ENCODE measurements at regions of chr13 and their contacts with region 1.

Region 1: DNA sequence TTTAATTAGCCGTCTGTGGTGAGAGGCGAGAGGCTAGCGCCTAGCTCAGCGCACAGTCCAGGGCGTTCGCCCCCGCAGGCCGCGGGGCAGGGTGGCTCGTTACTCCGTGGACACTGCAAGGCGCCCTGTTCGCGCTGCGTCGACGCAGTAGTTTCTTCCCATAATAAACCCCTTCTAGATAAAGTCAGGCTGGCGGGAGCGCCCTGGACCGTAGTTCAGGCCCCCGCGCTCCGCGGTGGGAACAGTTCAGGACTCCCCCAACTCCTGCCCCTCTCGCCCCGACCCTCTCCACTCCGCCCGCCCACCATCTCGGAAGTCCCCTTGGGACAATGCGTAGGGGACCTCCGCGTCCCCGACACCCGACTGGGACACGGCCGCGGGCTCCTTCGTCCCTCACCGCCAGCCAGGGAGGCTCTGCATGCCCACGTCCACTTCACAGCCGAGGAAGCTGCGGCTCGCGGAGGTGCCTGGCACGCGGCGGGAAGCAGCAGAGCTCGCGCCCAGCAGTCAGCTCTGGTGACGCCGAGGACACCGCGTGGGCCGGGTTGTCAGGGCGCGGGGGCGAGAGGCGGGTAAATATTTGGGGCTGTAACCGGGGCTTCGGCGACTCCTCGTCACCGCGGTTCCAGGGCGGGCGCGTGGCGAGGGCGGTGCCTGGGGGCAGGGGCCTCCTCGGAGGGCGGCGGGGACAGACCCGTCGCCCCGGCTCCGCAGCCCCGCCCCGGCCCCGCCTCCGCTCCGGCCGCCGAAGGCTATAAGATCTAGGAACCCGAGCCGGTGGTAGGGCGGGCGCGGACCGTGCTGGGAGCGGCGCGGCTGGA is at the start of gene RGCC:
- DNase-seq: peak; percentile 97
- H3K4me3 Mint-ChIP-seq: peak within 1 kb of the TSS; percentile 93
- H3K27ac Mint-ChIP-seq: peak within 1 kb of the TSS; percentile 97
- H3K4me1 Mint-ChIP-seq: peaks cover 41% of the 10 kb centered on the region
- H3K27me3 Mint-ChIP-seq: peaks cover 26% of the 10 kb centered on the region
- total RNA-seq, gene RGCC: 113 and 117 TPM in 2 replicates

Region 2: GRCh38 chr13:41310963-41311606 is 145.9 kb before region 1 on chr13 and contains the start of gene NAA16:
- intact Hi-C with region 1: loop called (anchors 2 kb)
- DNase-seq: peak; percentile 98
- H3K4me3 Mint-ChIP-seq: peak within 1 kb of the TSS; percentile 94
- H3K27ac Mint-ChIP-seq: peak within 1 kb of the TSS; percentile 93
- H3K4me1 Mint-ChIP-seq: peaks cover 37% of the 10 kb centered on the region
- H3K27me3 Mint-ChIP-seq: no peaks in the 10 kb centered on the region
- total RNA-seq, gene NAA16: 30.3 and 31.2 TPM in 2 replicates

Region 3: GRCh38 chr13:41345914-41346589 is 110.9 kb before region 1 on chr13:
- intact Hi-C with region 1: no loop called
- DNase-seq: peak; percentile 45
- H3K4me3 Mint-ChIP-seq: no peak overlapping the region
- H3K27ac Mint-ChIP-seq: no peak overlapping the region
- H3K4me1 Mint-ChIP-seq: peaks cover 10% of the 10 kb centered on the region
- H3K27me3 Mint-ChIP-seq: no peaks in the 10 kb centered on the region

Region 4: DNA sequence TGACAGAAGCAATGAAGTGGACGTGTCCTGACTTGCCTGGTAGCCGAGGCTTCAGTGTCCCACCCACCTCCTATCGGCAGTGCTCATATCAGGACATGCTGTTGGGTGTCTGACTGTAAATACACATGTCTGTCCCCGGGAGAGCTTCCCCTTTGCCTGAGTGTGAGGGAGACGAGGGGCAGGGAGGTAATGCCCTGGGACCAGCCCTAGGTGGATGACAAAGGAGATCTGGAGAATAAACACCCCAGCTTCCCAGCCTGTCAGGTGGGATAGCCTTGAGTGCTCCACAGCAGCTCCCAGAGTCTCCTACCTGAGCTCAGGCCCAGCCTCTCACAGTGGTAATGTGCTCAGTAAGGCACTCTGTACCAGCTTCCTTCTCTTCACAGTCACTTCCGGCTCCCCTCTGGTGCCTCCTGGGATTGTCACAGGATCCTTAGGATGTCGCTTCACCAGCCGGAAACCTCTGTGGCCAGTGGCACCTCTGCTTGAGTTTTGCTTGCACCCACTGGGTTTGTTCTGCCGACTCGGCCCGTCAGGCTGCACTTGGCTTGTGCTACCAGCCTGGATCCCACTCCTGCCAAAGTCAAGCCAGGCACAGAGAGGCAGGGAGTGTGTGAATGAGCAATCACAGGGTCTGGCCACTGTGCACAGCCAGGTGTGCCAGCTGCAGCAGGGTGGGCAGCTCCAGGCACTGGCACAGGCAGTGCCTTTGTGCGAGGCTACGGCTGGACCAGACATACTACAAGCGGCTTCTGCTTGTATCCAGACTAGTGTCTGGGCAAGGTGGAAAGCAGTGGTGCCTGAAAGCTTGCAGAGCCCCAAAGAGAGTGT is 54.1 kb before region 1 on chr13:
- intact Hi-C with region 1: loop called (anchors 2 kb)
- DNase-seq: peak; percentile 67
- H3K4me3 Mint-ChIP-seq: no peak overlapping the region
- H3K27ac Mint-ChIP-seq: no peak overlapping the region
- H3K4me1 Mint-ChIP-seq: no peaks in the 10 kb centered on the region
- H3K27me3 Mint-ChIP-seq: peaks cover 9% of the 10 kb centered on the region

Region 5: DNA sequence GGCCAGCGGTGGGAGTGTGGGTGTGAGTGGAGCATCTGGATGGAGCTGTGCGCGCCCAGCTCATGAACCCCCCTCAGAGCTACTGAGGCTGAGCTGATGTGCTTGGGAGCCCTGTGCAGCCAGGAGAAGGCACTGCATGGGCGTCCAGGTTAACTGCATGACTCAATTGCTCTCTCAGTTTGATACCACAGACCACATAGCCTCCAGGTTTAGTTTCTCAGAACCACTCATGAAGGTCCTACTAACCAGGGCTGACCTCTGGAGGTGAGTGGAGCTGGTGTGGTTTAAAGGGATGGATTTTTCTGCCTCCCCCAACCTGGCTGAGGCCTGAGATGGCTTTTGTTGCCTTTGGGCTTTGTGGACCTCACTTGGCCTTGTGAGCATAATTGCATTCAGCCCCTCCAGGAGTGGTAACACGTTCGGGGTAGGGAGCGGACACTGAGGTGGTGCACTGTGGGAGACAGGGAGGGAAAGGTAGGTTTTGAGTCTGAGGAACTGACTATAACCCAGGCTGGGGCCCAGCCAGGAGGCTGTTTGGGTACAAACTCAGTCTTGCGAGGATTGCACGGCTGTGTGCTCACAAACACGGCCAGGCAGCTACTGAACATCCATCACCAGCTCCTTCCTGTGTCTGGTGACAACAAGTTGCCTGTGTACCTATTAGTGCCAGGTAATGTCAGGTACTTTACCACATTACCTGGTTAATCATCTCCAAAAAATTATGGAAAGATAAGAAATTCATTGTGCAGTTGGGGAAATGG is 97.8 kb after region 1 on chr13:
- intact Hi-C with region 1: loop called (anchors 1 kb)
- DNase-seq: peak; percentile 67
- H3K4me3 Mint-ChIP-seq: peak overlapping the region; percentile 31
- H3K27ac Mint-ChIP-seq: peak overlapping the region; percentile 25
- H3K4me1 Mint-ChIP-seq: peaks cover 15% of the 10 kb centered on the region
- H3K27me3 Mint-ChIP-seq: no peaks in the 10 kb centered on the region

Region 6: DNA sequence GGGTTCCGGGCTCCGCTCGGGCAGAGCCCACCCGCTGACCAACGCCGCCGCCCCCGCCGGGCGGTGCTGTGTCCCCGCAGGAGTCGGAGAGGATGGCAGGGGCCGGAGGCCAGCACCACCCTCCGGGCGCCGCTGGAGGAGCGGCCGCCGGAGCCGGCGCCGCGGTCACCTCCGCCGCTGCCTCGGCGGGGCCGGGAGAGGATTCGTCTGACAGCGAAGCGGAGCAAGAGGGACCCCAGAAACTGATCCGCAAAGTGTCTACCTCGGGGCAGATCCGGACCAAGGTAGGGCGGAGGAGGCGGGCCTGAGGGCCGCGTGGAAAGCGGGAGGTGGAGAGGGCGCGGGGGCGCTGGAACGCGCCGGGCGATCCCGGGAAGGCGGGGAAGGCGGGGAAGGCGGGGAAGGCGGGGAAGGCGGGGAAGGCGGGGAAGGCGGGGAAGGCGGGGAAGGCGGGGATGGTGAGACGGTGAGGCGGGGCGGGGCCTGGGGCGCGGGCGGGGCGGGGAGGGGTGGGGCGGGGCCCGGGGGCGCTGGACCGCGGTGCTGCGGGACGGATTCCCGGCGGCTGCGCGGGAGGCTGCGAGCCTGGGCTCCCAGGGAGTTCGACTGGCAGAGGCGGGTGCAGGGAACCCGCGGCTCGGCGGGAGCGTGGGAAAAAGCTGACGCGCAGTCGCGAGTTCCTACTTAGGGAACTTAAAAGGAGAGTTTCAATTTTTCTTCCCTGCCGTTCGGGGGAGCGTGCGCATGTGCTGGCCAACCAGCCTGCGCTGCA is 591.9 kb after region 1 on chr13:
- intact Hi-C with region 1: loop called (anchors 5 kb)
- DNase-seq: peak; percentile 89
- H3K4me3 Mint-ChIP-seq: peak overlapping the region; percentile 90
- H3K27ac Mint-ChIP-seq: peak overlapping the region; percentile 79
- H3K4me1 Mint-ChIP-seq: peaks cover 20% of the 10 kb centered on the region
- H3K27me3 Mint-ChIP-seq: peaks cover 12% of the 10 kb centered on the region

Region 7: GRCh38 chr13:42432711-42433110 is 975.7 kb after region 1 on chr13:
- intact Hi-C with region 1: no loop called
- DNase-seq: no peak
- H3K4me3 Mint-ChIP-seq: no peak overlapping the region
- H3K27ac Mint-ChIP-seq: no peak overlapping the region
- H3K4me1 Mint-ChIP-seq: no peaks in the 10 kb centered on the region
- H3K27me3 Mint-ChIP-seq: no peaks in the 10 kb centered on the region

Measured in activated CD4-positive, alpha-beta T cell treated with anti-CD3 and anti-CD28 coated beads, Interleukin-2, amount 10 ng/mL, durations not matched to agents 24 days and 14 days (primary cell).